Dorsolateral prefrontal cortex (tissue), 120 donors: ENCODE measurements at regions of chr2 and their contacts with region 1.

Region 1: DNA sequence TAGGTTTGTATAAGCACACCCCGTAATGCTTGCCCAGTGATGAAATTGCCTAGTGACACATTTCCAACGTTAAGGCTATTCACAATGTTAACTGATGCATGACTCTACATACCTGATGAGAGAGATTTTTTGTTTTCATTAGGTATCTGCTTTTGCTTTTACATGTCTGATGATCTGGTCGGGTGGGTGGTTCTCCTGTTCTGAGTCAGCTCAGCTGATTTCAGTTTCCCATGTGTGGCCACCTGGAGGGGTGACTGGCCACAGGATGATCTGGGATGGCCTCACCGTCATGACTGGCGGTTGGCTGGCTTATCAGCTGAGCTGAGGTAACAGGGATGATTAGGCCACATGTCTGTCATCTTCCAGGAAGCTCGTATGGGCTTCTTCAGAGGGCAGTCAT is 33.8 kb upstream of the ACYP2 start:
- DNase-seq: no peak
- H3K4me3 ChIP-seq: no peak overlapping the region
- H3K27ac ChIP-seq: peak overlapping the region in 4 of 59 donors; percentile 4 to 87 (median 14)
- H3K27me3 ChIP-seq: no peaks in the 10 kb centered on the region
- CTCF ChIP-seq: no peak

Region 2: DNA sequence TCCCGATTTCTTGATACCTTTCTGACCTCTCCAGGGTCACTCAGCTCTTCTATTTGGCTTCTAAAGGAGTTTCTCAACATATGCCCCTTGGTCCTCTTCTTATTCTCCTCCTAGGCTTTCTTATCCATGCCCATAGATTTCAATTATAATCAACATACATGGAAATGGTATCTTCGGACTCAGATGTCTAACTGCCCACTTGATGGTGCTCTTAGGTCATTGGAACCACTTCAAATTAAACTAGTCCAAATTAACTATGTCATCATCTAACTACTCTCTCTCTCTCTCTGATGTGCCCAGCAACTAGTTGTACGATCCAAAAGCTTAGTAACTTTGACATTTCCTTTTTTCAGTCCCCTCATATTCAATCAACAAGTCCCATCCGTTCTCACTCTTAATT is 178.6 kb before region 1 on chr2:
- intact Hi-C with region 1: loop called in 1 of 2 experiments (anchors 5 kb)
- DNase-seq: no peak
- H3K4me3 ChIP-seq: no peak overlapping the region
- H3K27ac ChIP-seq: peak overlapping the region in 44 of 59 donors; percentile 3 to 82 (median 52)
- H3K27me3 ChIP-seq: no peaks in the 10 kb centered on the region
- CTCF ChIP-seq: peak in 28 of 56 donors; percentile 7 to 63 (median 38)

Region 3: GRCh38 chr2:53970724-53971602 is 110.6 kb before region 1 on chr2 and contains the start of gene PSME4:
- intact Hi-C with region 1: loop called (anchors 10 kb)
- DNase-seq: peak; percentile 86 to 96 (median 93)
- H3K4me3 ChIP-seq: peak within 1 kb of the TSS; percentile 58 to 100 (median 94)
- H3K27ac ChIP-seq: peak within 1 kb of the TSS; percentile 69 to 97 (median 92)
- H3K27me3 ChIP-seq: no peaks in the 10 kb centered on the region
- CTCF ChIP-seq: peak in 13 of 56 donors; percentile 9 to 37 (median 19)
- total RNA-seq, gene PSME4: 25.8 to 76.6 (median 43.2) TPM

Region 4: GRCh38 chr2:54041135-54041534 is 40.4 kb before region 1 on chr2:
- intact Hi-C with region 1: loop called in 1 of 2 experiments (anchors 2 kb)
- DNase-seq: peak in 6 of 10 donors; percentile 28 to 73 (median 54)
- H3K4me3 ChIP-seq: no peak overlapping the region
- H3K27ac ChIP-seq: peak overlapping the region in 54 of 59 donors; percentile 16 to 99 (median 96)
- H3K27me3 ChIP-seq: no peaks in the 10 kb centered on the region
- CTCF ChIP-seq: no peak